Calu3 (cell line): ENCODE measurements at regions of chr1 and their contacts with region 1.

Region 1: DNA sequence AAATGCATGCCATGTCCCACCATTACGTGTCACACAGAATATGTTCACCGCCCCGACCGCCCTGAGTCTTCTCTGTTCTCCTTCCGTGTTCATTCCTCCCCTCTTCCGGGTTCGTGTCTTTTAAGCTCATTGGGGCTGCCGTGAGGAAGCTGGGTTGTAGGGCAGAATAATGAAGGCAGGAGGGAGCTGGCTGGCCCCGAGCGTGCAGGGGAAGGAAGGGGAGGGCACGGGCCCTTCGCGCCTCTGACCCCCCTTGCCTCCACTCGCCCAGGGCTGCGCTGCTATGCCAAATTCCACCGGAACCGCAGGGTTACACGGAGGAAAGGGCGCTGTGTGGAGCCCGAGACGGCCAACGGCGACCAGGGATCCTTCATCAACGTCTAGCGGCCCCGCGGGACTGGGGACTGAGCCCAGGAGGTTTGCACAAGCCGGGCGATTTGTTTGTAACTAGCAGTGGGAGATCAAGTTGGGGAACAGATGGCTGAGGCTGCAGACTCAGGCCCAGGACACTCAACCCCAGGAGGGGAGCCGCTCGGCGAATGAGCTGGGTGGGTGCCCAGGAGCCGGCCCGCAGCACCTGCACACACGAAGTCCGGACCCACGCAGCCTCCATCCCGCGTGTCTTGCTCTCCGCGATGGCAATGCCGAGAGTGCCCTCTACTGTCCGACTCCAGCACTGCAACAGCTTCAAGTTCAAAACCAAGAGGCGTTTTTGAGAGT is 16.5 kb upstream of the AGTRAP start:
- DNase-seq: peak; percentile 56
- H3K4me3 Mint-ChIP-seq: peak overlapping the region; percentile 72
- H3K27ac Mint-ChIP-seq: no peak overlapping the region
- H3K4me1 Mint-ChIP-seq: no peaks in the 10 kb centered on the region
- H3K27me3 Mint-ChIP-seq: peaks cover 22% of the 10 kb centered on the region
- CTCF ChIP-seq: peak; percentile 92

Region 2: DNA sequence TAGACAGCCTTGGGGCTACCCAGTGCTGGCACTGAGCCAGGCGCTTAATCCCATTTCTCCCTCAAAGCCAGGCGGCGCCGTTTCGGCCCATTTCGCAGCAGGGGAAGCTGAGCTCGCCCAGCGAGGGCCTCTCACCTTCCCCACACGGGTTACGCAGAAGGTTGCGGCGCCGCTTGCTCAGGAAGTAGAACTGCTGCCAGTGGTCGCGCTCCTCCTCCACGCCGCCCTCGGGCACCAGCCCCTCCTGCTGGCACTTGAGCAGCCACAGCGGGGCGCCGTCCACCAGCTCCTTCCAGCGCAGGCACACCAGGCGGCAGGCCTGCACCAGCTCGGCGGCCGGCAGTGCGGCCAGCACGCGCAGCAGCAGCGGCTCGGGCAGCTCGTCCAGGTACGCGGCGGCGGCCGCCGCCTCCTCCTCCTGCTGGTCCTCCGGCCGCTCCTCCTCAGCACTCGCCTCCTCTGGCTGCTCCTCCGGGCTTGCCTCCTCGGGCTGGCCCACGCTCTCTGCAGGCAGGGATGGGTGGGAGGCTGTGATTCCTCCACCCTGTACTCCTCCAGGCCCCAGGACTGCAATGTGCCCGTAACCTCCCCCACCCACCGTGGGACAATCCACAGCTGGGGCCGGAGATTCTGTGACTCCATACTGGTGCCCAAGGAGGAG is 69.0 kb before region 1 on chr1:
- CTCF ChIA-PET with region 1: interaction called, 18 read pairs
- intact Hi-C with region 1: loop called (anchors 5 kb)
- DNase-seq: peak; percentile 79
- H3K4me3 Mint-ChIP-seq: peak overlapping the region; percentile 63
- H3K27ac Mint-ChIP-seq: no peak overlapping the region
- H3K4me1 Mint-ChIP-seq: peaks cover 9% of the 10 kb centered on the region
- H3K27me3 Mint-ChIP-seq: peaks cover 28% of the 10 kb centered on the region
- CTCF ChIP-seq: peak; percentile 63

Region 3: GRCh38 chr1:11661103-11661502 is 58.4 kb before region 1 on chr1:
- CTCF ChIA-PET with region 1: interaction called, 13 read pairs
- intact Hi-C with region 1: no loop called
- DNase-seq: no peak
- H3K4me3 Mint-ChIP-seq: no peak overlapping the region
- H3K27ac Mint-ChIP-seq: no peak overlapping the region
- H3K4me1 Mint-ChIP-seq: no peaks in the 10 kb centered on the region
- H3K27me3 Mint-ChIP-seq: no peaks in the 10 kb centered on the region
- CTCF ChIP-seq: no peak

Region 4: GRCh38 chr1:11735854-11736745 is 16.6 kb after region 1 on chr1 and contains the start of gene AGTRAP:
- CTCF ChIA-PET with region 1: interaction called, 10 read pairs
- intact Hi-C with region 1: no loop called
- DNase-seq: peak; percentile 88
- H3K4me3 Mint-ChIP-seq: peak within 1 kb of the TSS; percentile 93
- H3K27ac Mint-ChIP-seq: peak within 1 kb of the TSS; percentile 70
- H3K4me1 Mint-ChIP-seq: peaks cover 5% of the 10 kb centered on the region
- H3K27me3 Mint-ChIP-seq: no peaks in the 10 kb centered on the region
- CTCF ChIP-seq: no peak
- total RNA-seq, gene AGTRAP: 30.4 and 41.2 TPM in 2 replicates

Region 5: GRCh38 chr1:11761988-11762406 is 42.5 kb after region 1 on chr1 and contains the start of gene C1orf167:
- CTCF ChIA-PET with region 1: no interaction called
- intact Hi-C with region 1: no loop called
- DNase-seq: no peak
- H3K4me3 Mint-ChIP-seq: no peak within 1 kb of the TSS
- H3K27ac Mint-ChIP-seq: no peak within 1 kb of the TSS
- H3K4me1 Mint-ChIP-seq: no peaks in the 10 kb centered on the region
- H3K27me3 Mint-ChIP-seq: peaks cover 53% of the 10 kb centered on the region
- CTCF ChIP-seq: no peak
- total RNA-seq, gene C1orf167: not detected in 2 replicates